Esophagus squamous epithelium (tissue), 5 donors: ENCODE measurements at regions of chr2 and their contacts with region 1.

Region 1: GRCh38 chr2:172172513-172173173 is 69.9 kb upstream of the DLX2 start:
- DNase-seq: no peak
- H3K4me3 ChIP-seq: peak overlapping the region; percentile 45 to 80 (median 56)
- H3K27ac ChIP-seq: peak overlapping the region; percentile 49 to 80 (median 70)
- H3K4me1 ChIP-seq: peaks cover 7 to 48% (median 14%) of the 10 kb centered on the region in 3 donors
- H3K27me3 ChIP-seq: peaks cover 0 to 12% (median 4%) of the 10 kb centered on the region in 4 donors
- CTCF ChIP-seq: peak; percentile 31 to 89 (median 80)
- POLR2A ChIP-seq: no peak

Region 2: GRCh38 chr2:172137943-172138342 is 34.7 kb before region 1 on chr2:
- intact Hi-C with region 1: no loop called
- DNase-seq: no peak
- H3K4me3 ChIP-seq: no peak overlapping the region
- H3K27ac ChIP-seq: no peak overlapping the region
- H3K4me1 ChIP-seq: no peaks in the 10 kb centered on the region
- H3K27me3 ChIP-seq: peaks cover 0 to 12% (median 0%) of the 10 kb centered on the region in 4 donors
- CTCF ChIP-seq: no peak
- POLR2A ChIP-seq: no peak

Region 3: DNA sequence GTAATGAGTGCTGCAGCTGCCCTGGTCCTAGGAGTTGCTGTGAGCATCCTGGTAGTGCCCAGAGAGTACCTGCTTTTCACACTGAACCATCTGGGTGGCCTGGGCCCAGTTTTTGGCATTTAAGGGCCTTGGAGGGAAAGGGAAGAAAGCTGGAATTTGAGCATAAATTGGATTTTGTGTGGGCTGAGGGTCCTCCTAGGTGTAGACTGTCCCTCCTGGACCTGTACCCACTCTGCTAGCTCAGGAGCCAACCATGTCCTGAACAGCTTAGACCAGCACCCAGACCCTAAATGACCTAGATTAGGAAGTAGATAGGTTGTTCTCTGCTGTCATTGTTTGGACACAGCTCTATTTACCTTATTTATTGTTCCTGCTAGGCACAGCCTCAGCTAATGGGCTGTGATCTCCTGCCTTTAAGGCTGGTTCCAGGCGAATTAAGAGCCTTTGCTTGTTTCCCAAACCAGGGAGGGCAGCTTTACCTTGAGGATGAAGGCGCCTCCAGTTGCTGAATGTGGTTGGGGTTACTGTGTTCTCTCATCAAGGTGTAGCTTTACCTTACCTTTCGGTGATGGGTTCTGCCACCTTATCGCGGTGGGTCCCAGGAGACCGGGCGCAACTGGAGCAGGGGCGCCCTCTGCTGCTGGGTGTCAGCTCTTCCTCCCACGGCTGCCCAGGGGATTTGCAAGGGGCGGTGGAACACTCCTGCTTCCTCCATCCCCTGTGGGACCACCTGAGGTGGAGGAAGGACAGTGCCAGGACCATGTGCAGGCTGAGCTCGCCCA is 289.1 kb after region 1 on chr2:
- intact Hi-C with region 1: loop called (anchors 5 kb)
- DNase-seq: no peak
- H3K4me3 ChIP-seq: no peak overlapping the region
- H3K27ac ChIP-seq: peak overlapping the region in 3 of 4 donors; percentile 54 to 65 (median 55)
- H3K4me1 ChIP-seq: peaks cover 35 to 83% (median 42%) of the 10 kb centered on the region in 3 donors
- H3K27me3 ChIP-seq: peaks cover 0 to 23% (median 0%) of the 10 kb centered on the region in 4 donors
- CTCF ChIP-seq: peak; percentile 52 to 87 (median 80)
- POLR2A ChIP-seq: no peak

Region 4: GRCh38 chr2:172710584-172711024 is 538.0 kb after region 1 on chr2:
- intact Hi-C with region 1: no loop called
- DNase-seq: no peak
- H3K4me3 ChIP-seq: no peak overlapping the region
- H3K27ac ChIP-seq: no peak overlapping the region
- H3K4me1 ChIP-seq: no peaks in the 10 kb centered on the region
- H3K27me3 ChIP-seq: peaks cover 0 to 10% (median 0%) of the 10 kb centered on the region in 4 donors
- CTCF ChIP-seq: peak; percentile 21 to 78 (median 56)
- POLR2A ChIP-seq: no peak